HEK293 (cell line): ENCODE measurements at regions of chr1 and their contacts with region 1.

Region 1: DNA sequence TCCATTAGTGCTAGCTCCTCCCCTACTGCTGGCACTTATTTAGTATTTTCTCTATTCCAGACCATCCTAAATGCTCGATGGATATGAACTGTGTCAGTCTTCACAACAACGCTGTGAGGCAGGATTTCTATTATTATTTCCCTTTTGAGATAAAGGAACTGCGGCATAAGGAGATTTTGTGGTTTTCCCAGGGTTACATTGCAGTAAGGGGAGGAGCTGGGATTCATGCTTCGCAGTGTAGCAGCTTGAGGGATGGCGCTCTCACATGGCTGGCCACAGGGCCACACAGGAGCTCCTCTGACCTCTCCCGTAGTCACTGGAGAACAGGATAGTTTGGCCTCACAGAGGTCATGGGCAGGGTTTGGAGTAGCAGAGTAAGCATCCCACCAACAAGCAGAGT is 116.9 kb downstream of the BEND5 start:
- H3K4me3 ChIP-seq: no peak overlapping the region
- H3K27ac ChIP-seq: no peak overlapping the region
- H3K4me1 ChIP-seq: no peaks in the 10 kb centered on the region
- CTCF ChIP-seq: no peak

Region 2: DNA sequence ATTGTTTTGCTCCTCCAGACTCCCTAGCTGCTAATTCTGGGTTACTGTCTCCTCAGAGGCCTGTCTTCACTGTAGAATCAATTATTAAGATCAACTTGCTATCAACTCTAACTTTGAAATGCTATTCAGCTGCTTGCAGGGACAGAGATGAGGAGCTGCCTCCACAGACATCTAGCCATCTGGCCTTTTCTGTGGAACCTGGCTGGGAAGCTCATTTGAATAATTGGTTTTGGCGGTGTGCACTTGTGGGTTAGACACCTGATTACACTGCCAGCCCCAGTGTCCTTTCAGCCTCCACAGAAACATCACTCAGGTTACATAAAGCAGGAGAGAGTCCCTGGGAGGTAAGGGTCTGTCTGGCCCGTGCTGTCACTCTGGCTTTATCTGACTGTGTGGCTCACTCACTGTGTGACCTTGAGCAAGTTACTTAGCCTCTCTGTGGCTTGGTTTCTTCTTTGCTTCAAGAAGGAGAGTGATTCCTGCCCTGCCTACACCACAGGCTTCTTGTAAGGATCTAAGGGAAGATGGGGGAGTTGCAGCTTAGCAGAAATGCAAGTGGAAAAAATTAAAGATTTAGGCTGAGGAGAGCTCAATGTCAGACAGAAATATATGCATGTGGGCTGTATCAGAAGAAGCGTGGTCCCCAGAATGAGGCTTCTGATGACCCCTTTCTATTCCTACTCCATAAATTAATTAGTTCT is 14.7 kb before region 1 on chr1:
- CTCF ChIA-PET with region 1: no interaction called
- POLR2A ChIA-PET with region 1: no interaction called
- H3K4me3 ChIP-seq: no peak overlapping the region
- H3K27ac ChIP-seq: no peak overlapping the region
- H3K4me1 ChIP-seq: no peaks in the 10 kb centered on the region
- CTCF ChIP-seq: no peak

Region 3: DNA sequence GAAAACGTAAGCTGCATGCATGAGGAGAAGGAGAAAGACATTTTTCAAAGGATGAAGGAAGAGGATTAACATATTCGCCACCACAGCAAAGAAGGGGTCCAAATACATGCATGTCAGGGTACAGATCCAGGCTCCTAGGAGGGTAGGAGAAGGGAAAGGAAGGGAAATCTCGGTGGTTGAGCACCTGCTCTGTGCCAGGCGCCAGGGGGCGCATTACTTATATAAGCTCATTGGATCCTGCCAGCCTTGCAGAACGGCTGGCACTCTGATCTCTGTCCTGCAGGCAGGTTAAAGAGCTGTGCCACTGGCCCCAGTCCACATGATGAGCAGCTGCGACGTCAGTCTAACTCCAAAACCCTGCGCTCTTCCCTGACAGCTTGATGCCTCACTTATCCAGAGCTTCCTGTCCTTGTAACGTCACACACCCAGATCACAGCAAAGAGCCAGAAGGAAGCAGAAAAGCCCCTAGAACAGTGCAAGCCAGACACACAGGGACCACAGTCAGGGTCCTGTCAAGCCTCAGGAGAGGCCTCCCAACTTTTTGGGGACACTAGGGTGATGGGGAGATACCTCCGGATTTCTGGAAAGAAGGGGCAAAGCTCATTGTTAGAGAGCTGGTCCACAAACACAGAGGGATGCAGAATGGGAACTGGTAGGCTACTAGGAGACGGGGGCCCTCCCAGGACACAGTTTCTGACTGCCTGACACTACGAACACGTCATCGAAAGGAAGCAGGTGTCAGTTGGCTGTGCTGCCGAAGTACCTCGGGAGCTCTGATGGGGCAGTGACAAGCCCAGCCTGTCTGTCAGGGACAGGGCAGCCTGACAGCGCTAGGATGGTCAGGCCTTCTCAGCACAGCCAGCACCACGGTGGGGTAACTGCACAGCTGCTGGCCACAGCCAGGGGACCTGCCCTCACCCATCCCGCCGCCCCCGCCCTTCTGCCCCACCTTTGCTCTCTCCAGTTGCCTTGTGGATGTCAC is 17.8 kb after region 1 on chr1:
- CTCF ChIA-PET with region 1: interaction called, 12 read pairs
- POLR2A ChIA-PET with region 1: no interaction called
- H3K4me3 ChIP-seq: no peak overlapping the region
- H3K27ac ChIP-seq: no peak overlapping the region
- H3K4me1 ChIP-seq: no peaks in the 10 kb centered on the region
- CTCF ChIP-seq: peak; percentile 61; the same call in 1 of the 2 replicates